Aorta (tissue), 5 donors: ENCODE measurements at regions of chr6 and their contacts with region 1.

Region 1: DNA sequence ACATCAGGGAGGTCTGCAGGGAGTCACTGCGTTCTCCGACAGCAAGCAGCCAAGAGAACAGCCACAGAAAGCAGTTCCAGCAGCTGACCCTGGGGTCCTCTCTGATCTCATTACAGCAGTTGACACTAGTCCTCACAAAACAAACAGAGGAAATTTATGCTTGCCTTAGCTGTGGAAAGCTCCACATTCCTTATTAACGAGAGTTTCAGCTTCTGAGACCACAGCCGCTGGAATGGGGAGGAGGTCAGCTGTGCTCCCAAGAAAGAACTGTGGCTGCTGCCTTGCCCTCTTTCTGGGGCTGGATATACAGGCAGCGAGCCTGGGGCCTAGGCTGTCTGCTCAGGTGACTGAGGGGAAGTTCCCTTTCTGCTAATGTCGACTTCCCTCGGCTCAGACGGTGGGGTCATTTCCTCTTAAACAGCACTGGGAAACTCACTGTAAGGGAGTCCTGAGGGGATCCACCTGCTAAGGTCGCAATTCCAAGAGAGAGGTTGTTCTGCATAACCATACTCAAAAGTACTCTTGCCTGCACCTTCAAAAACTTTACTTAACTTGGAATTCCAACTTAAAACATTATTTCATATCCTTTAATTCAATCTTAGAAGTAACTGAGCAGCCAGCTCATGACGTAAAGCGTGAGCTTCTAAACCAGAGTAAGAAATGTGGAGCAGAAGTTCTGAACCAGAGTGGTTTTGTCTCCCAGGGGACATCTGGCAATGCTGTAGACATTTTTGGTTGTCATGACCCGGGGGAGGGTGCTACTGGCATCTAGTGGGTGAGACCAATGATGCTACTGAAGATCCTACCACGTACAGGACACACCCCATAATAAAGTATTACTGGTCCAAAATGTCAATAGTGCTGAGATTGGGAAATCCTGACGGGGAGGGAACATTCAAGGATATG is 80.3 kb downstream of the BACH2 start:
- DNase-seq: peak in 1 of 2 donors; percentile 49
- ATAC-seq: no peak
- H3K4me3 ChIP-seq: no peak overlapping the region
- H3K27ac ChIP-seq: peak overlapping the region in 1 of 2 donors; percentile 65
- H3K4me1 ChIP-seq: no peaks in the 10 kb centered on the region
- H3K27me3 ChIP-seq: no peaks in the 10 kb centered on the region

Region 2: GRCh38 chr6:89999154-89999553 is 217.2 kb before region 1 on chr6:
- intact Hi-C with region 1: loop called in 1 of 2 experiments (anchors 10 kb)
- DNase-seq: no peak
- ATAC-seq: no peak
- H3K4me3 ChIP-seq: no peak overlapping the region
- H3K27ac ChIP-seq: peak overlapping the region in 1 of 2 donors; percentile 25
- H3K4me1 ChIP-seq: peaks cover 2 to 14% of the 10 kb centered on the region in 2 donors
- H3K27me3 ChIP-seq: no peaks in the 10 kb centered on the region

Region 3: DNA sequence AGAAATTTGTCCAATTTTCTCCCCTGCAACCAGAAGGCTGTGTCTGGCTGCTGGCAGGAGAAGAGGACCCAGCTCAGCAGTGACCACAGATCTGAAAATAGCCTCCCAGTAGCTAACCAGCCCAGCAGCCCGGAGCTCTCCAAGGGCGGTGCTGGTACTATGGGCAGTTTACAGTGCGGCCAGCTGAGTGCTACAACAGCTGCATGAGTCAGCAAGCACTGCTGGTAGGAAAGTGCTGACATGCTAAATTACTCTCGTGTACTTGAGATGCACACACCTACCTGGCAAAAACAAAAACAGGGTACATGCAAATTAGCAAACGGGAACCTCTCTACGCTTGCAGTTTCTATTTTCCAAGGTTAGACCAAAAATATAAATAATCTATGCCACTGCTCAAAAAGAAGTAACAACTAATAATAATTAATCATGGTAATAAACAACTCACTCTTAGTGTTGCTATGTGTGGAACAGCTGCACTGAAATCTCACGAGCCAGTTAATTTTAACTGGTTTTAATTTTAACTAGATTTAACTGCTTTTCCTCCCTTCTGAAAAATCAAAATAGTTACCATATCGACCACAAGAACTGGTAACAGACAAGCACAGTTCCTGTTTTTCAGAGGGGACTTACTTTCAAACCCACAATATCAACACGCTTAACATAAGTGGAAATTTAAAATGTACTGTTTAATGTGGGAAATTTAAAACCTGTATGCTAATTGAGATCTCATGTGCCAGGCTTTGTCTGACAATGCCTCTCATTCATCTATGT is 69.5 kb after region 1 on chr6:
- intact Hi-C with region 1: loop called (anchors 1 to 5 kb)
- DNase-seq: peak; percentile 90 to 92
- ATAC-seq: peak; percentile 95
- H3K4me3 ChIP-seq: no peak overlapping the region
- H3K27ac ChIP-seq: no peak overlapping the region
- H3K4me1 ChIP-seq: peaks cover 3% of the 10 kb centered on the region in 2 donors
- H3K27me3 ChIP-seq: no peaks in the 10 kb centered on the region

Region 4: GRCh38 chr6:90370493-90370959 is 154.2 kb after region 1 on chr6:
- intact Hi-C with region 1: loop called (anchors 5 to 10 kb)
- DNase-seq: no peak
- ATAC-seq: no peak
- H3K4me3 ChIP-seq: no peak overlapping the region
- H3K27ac ChIP-seq: no peak overlapping the region
- H3K4me1 ChIP-seq: no peaks in the 10 kb centered on the region
- H3K27me3 ChIP-seq: no peaks in the 10 kb centered on the region

Region 5: DNA sequence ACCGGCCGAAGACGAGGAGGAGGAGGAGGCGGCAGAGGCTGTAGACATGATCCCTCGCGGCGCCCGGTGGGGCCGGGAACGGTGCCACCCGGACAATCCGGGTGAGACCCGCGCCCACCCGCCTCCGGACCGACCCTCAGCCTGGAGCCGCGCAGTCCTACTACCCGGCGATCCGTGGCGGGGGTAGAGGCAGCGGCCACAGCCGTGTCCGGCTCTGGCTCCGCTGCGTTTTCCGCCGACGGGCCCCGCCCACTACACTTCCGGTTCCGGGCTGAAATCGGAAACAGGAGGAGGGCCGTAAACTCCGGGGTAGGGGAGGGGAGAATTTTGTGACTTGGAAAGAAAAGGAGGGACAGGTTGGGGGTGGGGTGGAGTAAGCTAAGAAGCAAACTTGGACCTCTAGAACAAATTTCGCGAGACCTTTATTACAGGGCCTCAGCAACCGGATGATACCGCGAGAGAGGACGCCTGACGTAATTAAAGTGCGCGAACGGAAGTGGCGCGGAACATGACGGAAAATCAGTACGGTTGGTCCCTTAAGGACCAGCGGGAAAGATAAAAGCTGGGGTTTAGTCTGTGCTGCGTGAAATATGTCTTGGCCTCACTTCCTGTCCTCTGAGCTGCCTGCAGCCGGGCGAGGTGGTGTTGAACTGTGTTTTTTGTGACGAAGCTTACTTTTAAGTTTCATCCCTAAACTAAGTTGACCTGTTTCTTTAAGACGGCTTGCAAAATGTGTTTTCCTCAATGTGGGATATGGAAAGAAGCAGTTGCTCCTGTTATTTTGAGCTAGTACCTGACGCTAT is 370.7 kb after region 1 on chr6 and contains the start of gene MAP3K7:
- intact Hi-C with region 1: no loop called
- DNase-seq: peak; percentile 93 to 96
- ATAC-seq: peak; percentile 98
- H3K4me3 ChIP-seq: peak within 1 kb of the TSS; percentile 85 to 98
- H3K27ac ChIP-seq: peak within 1 kb of the TSS; percentile 34 to 81
- H3K4me1 ChIP-seq: peaks cover 0 to 5% of the 10 kb centered on the region in 2 donors
- H3K27me3 ChIP-seq: no peaks in the 10 kb centered on the region
- total RNA-seq, gene MAP3K7: 24.8 to 29.2 TPM